Dorsolateral prefrontal cortex (tissue), 120 donors: ENCODE measurements at regions of chr12 and their contacts with region 1.

Region 1: GRCh38 chr12:121023809-121024208 is 7.5 kb upstream of the C12orf43 start:
- DNase-seq: no peak
- H3K4me3 ChIP-seq: no peak overlapping the region
- H3K27ac ChIP-seq: no peak overlapping the region
- H3K27me3 ChIP-seq: no peaks in the 10 kb centered on the region
- CTCF ChIP-seq: no peak

Region 2: DNA sequence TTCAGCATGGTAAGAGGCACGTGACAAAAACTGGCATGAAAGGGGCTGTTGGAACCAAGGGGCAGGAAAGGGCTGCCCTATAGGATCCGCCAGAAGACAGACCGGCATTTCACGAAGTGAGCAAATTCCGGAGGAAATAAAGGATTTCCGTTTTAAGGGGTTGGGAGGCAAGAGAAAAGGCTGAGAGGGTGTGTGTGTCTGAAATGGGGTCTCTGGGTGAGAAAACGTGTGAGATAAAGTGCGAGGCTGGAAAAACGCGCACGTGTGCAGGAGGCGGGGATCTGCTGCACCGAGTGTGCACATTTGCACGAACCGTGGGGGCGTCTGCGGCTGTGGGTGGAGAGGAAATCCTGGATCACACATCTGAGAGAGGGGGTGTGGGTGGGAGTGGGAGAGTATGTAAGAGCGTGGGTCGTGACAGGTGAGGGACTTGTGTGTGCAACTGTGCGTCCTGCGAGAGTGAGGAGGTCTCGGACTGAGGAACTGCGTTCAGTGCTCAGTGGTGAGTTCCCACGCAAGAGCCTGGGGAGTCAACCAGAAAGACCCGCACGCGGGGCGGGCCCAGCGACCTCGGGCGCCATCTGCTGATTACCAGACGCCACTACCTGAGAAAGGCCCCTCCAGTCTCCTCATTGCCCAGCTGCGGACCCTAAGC is 71.9 kb after region 1 on chr12:
- intact Hi-C with region 1: loop called in 1 of 2 experiments (anchors 5 kb)
- DNase-seq: peak; percentile 56 to 82 (median 72)
- H3K4me3 ChIP-seq: peak overlapping the region; percentile 31 to 73 (median 52)
- H3K27ac ChIP-seq: peak overlapping the region in 4 of 59 donors; percentile 21 to 29 (median 26)
- H3K27me3 ChIP-seq: no peaks in the 10 kb centered on the region
- CTCF ChIP-seq: peak; percentile 56 to 91 (median 80)